CD4-positive, alpha-beta T cell (primary cell): ENCODE measurements at regions of chr11 and their contacts with region 1.

Region 1: DNA sequence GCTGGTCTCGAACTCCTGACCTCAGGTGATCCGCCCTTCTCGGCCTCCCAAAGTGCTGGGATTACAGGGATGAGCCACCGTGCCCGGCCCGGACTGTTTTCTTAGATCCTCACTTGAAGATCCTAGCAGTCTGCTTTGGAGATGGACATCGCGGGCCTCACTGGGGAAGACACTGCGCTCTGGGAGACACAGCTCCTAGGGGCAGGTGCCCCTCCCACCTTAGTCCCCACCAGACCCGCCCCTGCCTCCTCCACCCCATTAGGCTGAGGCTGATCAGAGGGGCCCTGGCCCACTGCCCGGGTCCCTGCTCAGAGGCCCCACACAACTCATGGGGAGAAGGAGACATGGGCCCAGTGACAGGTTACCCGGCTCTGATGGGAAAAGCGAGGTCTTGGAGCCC is 11.3 kb upstream of the LTO1 start:
- DNase-seq: no peak
- ATAC-seq: no peak
- H3K4me3 ChIP-seq: no peak overlapping the region
- H3K4me3 Mint-ChIP-seq: no peak overlapping the region
- H3K27ac ChIP-seq: no peak overlapping the region
- H3K27ac Mint-ChIP-seq: no peak overlapping the region
- H3K4me1 ChIP-seq: peaks cover 9% of the 10 kb centered on the region
- H3K4me1 Mint-ChIP-seq: peaks cover 5% of the 10 kb centered on the region
- H3K27me3 ChIP-seq: peaks cover 12 to 14% of the 10 kb centered on the region in 2 experiments
- H3K27me3 Mint-ChIP-seq: peaks cover 36% of the 10 kb centered on the region
- CTCF ChIP-seq: no peak

Region 2: DNA sequence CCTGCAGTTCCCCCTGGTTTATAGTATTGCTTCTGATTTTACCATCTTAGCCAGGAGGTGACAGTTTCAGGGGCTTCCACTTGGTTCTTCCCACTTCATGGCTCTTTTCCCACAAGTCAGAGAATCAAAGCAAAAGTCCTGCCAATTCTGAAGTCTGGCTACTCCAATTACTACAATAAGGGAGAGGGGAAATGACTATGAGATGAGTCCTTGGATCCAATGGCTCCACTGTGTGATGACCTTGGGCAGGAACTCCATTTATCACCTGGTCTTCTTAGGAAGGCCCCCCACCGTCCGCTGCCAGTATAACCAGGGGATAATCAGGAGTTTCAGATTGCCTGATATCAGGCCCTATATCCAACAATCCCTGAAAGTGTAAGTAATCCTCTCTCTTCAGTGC is 77.1 kb before region 1 on chr11:
- CTCF ChIA-PET with region 1: no interaction called
- POLR2A ChIA-PET with region 1: no interaction called
- intact Hi-C with region 1: no loop called
- DNase-seq: no peak
- ATAC-seq: no peak
- H3K4me3 ChIP-seq: no peak overlapping the region
- H3K4me3 Mint-ChIP-seq: no peak overlapping the region
- H3K27ac ChIP-seq: no peak overlapping the region
- H3K27ac Mint-ChIP-seq: no peak overlapping the region
- H3K4me1 ChIP-seq: no peaks in the 10 kb centered on the region
- H3K4me1 Mint-ChIP-seq: no peaks in the 10 kb centered on the region
- H3K27me3 ChIP-seq: peaks cover 0 to 4% of the 10 kb centered on the region in 2 experiments
- H3K27me3 Mint-ChIP-seq: peaks cover 38% of the 10 kb centered on the region
- CTCF ChIP-seq: no peak

Region 3: GRCh38 chr11:69801519-69802335 is 115.3 kb after region 1 on chr11:
- CTCF ChIA-PET with region 1: no interaction called
- POLR2A ChIA-PET with region 1: no interaction called
- intact Hi-C with region 1: loop called in 1 of 2 experiments (anchors 1 kb)
- DNase-seq: peak in 10 of 14 experiments; percentile 4 to 46 (median 19)
- ATAC-seq: no peak
- H3K4me3 ChIP-seq: no peak overlapping the region
- H3K4me3 Mint-ChIP-seq: no peak overlapping the region
- H3K27ac ChIP-seq: no peak overlapping the region
- H3K27ac Mint-ChIP-seq: no peak overlapping the region
- H3K4me1 ChIP-seq: no peaks in the 10 kb centered on the region
- H3K4me1 Mint-ChIP-seq: no peaks in the 10 kb centered on the region
- H3K27me3 ChIP-seq: peaks cover 0 to 4% of the 10 kb centered on the region in 2 experiments
- H3K27me3 Mint-ChIP-seq: peaks cover 4% of the 10 kb centered on the region
- CTCF ChIP-seq: peak; percentile 50

Region 4: GRCh38 chr11:69841859-69842698 is 155.6 kb after region 1 on chr11:
- CTCF ChIA-PET with region 1: no interaction called
- POLR2A ChIA-PET with region 1: no interaction called
- intact Hi-C with region 1: loop called (anchors 2 kb)
- DNase-seq: peak in 6 of 14 experiments; percentile 7 to 49 (median 28)
- ATAC-seq: no peak
- H3K4me3 ChIP-seq: no peak overlapping the region
- H3K4me3 Mint-ChIP-seq: no peak overlapping the region
- H3K27ac ChIP-seq: no peak overlapping the region
- H3K27ac Mint-ChIP-seq: no peak overlapping the region
- H3K4me1 ChIP-seq: no peaks in the 10 kb centered on the region
- H3K4me1 Mint-ChIP-seq: no peaks in the 10 kb centered on the region
- H3K27me3 ChIP-seq: peaks cover 6 to 8% of the 10 kb centered on the region in 2 experiments
- H3K27me3 Mint-ChIP-seq: peaks cover 18% of the 10 kb centered on the region
- CTCF ChIP-seq: peak; percentile 25

Region 5: DNA sequence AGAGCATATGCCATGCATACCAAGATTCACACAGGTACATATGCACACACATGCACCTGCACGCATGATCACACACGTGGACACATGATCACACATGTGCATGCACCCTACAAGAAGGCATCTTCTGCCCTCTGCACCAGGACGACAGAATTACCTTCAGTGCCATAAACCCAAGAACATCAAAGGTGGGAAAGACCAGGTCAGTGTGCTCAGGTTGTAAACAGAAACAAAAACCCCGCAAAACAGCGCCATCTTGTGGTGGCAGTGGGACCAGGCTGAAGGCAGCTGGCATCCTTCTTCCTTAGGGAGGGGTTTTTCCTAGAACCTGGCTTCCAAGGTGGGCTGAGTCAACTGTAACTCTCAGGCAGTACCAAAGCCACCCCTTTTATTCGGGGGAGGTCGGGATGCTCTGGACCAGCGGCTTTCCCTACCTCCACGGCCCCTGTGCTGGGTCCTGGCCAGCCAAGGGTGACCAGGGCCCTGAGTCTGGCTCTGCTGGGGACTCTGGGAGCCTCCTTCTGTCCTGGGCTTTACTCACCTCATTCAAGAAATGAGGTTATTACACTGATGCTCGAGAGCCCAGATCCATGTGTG is 202.1 kb after region 1 on chr11:
- CTCF ChIA-PET with region 1: interaction called, 5 read pairs
- POLR2A ChIA-PET with region 1: no interaction called
- intact Hi-C with region 1: loop called in 1 of 2 experiments (anchors 1 kb)
- DNase-seq: peak; percentile 43 to 79 (median 58)
- ATAC-seq: peak; percentile 46
- H3K4me3 ChIP-seq: no peak overlapping the region
- H3K4me3 Mint-ChIP-seq: no peak overlapping the region
- H3K27ac ChIP-seq: no peak overlapping the region
- H3K27ac Mint-ChIP-seq: no peak overlapping the region
- H3K4me1 ChIP-seq: peaks cover 5% of the 10 kb centered on the region
- H3K4me1 Mint-ChIP-seq: peaks cover 3% of the 10 kb centered on the region
- H3K27me3 ChIP-seq: peaks cover 15 to 24% of the 10 kb centered on the region in 2 experiments
- H3K27me3 Mint-ChIP-seq: peaks cover 53% of the 10 kb centered on the region
- CTCF ChIP-seq: peak; percentile 91

Region 6: GRCh38 chr11:70191495-70192140 is 505.2 kb after region 1 on chr11:
- CTCF ChIA-PET with region 1: no interaction called
- POLR2A ChIA-PET with region 1: no interaction called
- intact Hi-C with region 1: loop called (anchors 1 to 5 kb)
- DNase-seq: peak; percentile 15 to 69 (median 35)
- ATAC-seq: peak; percentile 55
- H3K4me3 ChIP-seq: no peak overlapping the region
- H3K4me3 Mint-ChIP-seq: no peak overlapping the region
- H3K27ac ChIP-seq: no peak overlapping the region
- H3K27ac Mint-ChIP-seq: no peak overlapping the region
- H3K4me1 ChIP-seq: peaks cover 7% of the 10 kb centered on the region
- H3K4me1 Mint-ChIP-seq: no peaks in the 10 kb centered on the region
- H3K27me3 ChIP-seq: peaks cover 4 to 13% of the 10 kb centered on the region in 2 experiments
- H3K27me3 Mint-ChIP-seq: peaks cover 16% of the 10 kb centered on the region
- CTCF ChIP-seq: peak; percentile 58